CD8-positive, alpha-beta T cell (primary cell): ENCODE measurements at regions of chr17 and their contacts with region 1.

Region 1: GRCh38 chr17:74296548-74296936 is 22.5 kb downstream of the DNAI2 start:
- DNase-seq: peak in 4 of 9 experiments; percentile 34 to 59 (median 56)
- ATAC-seq: no peak
- H3K4me3 ChIP-seq: no peak overlapping the region
- H3K4me3 Mint-ChIP-seq: no peak overlapping the region
- H3K27ac ChIP-seq: no peak overlapping the region
- H3K27ac Mint-ChIP-seq: no peak overlapping the region
- H3K4me1 ChIP-seq: no peaks in the 10 kb centered on the region
- H3K4me1 Mint-ChIP-seq: peaks cover 9% of the 10 kb centered on the region
- H3K27me3 ChIP-seq: no peaks in the 10 kb centered on the region
- H3K27me3 Mint-ChIP-seq: peaks cover 3% of the 10 kb centered on the region
- CTCF ChIP-seq: no peak

Region 2: GRCh38 chr17:74280093-74280513 is 16.4 kb before region 1 on chr17:
- CTCF ChIA-PET with region 1: interaction called, 41 read pairs
- POLR2A ChIA-PET with region 1: no interaction called
- intact Hi-C with region 1: no loop called
- DNase-seq: peak; percentile 33 to 90 (median 62)
- ATAC-seq: peak; percentile 71
- H3K4me3 ChIP-seq: no peak overlapping the region
- H3K4me3 Mint-ChIP-seq: peak overlapping the region; percentile 31
- H3K27ac ChIP-seq: peak overlapping the region; percentile 64 to 96
- H3K27ac Mint-ChIP-seq: peak overlapping the region; percentile 81
- H3K4me1 ChIP-seq: peaks cover 53% of the 10 kb centered on the region
- H3K4me1 Mint-ChIP-seq: peaks cover 44% of the 10 kb centered on the region
- H3K27me3 ChIP-seq: no peaks in the 10 kb centered on the region
- H3K27me3 Mint-ChIP-seq: no peaks in the 10 kb centered on the region
- CTCF ChIP-seq: no peak

Region 3: GRCh38 chr17:74361230-74362068 is 64.9 kb after region 1 on chr17 and contains the start of gene BTBD17:
- CTCF ChIA-PET with region 1: interaction called, 4 read pairs
- POLR2A ChIA-PET with region 1: no interaction called
- intact Hi-C with region 1: loop called in 1 of 2 experiments (anchors 2 kb)
- DNase-seq: peak in 5 of 9 experiments; percentile 37 to 65 (median 49)
- ATAC-seq: no peak
- H3K4me3 ChIP-seq: no peak within 1 kb of the TSS
- H3K4me3 Mint-ChIP-seq: no peak within 1 kb of the TSS
- H3K27ac ChIP-seq: no peak within 1 kb of the TSS
- H3K27ac Mint-ChIP-seq: no peak within 1 kb of the TSS
- H3K4me1 ChIP-seq: peaks cover 7% of the 10 kb centered on the region
- H3K4me1 Mint-ChIP-seq: peaks cover 2% of the 10 kb centered on the region
- H3K27me3 ChIP-seq: peaks cover 7 to 10% of the 10 kb centered on the region in 2 experiments
- H3K27me3 Mint-ChIP-seq: peaks cover 28% of the 10 kb centered on the region
- CTCF ChIP-seq: no peak
- total RNA-seq, gene BTBD17: not detected